ENCODE measurements at regions of chr20 and their contacts with region 1.

Region 1: DNA sequence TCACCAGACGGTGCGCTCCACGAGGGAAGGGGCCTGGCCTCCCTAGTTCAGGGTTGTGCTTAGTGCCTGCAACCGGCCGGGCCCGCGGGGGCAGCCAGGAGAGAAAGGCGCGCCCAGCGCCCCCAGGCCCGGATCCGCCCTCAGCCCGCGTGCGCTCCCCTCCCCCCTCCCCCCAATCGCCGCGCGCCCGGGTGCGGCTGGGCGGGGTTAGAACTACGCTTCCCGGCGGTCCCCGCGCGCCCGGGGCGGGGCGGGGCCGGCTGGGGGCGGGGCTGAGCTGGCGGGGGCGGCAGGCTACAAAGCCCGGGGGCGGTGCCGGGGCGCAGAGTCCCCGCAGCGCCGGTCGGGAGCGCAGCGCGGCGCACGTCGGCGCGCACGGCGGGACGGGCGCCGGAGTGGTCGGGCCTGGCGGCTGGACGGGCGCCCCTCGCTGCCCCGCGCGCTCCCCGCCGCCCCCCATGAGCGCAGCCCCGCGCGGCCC is at the start of gene RBM38:
- DNase-seq: peak; percentile 84
- ATAC-seq: peak; percentile 69
- H3K4me3 Mint-ChIP-seq: peak within 1 kb of the TSS; percentile 78
- H3K27ac Mint-ChIP-seq: peak within 1 kb of the TSS; percentile 93
- H3K4me1 Mint-ChIP-seq: peaks cover 43% of the 10 kb centered on the region
- H3K27me3 Mint-ChIP-seq: no peaks in the 10 kb centered on the region
- total RNA-seq, gene RBM38: 74.8 to 91.9 TPM

Region 2: GRCh38 chr20:57432874-57433491 is 41.9 kb after region 1 on chr20:
- CTCF ChIA-PET with region 1: interaction called, 24 read pairs
- DNase-seq: peak; percentile 91
- ATAC-seq: peak; percentile 93
- H3K4me3 Mint-ChIP-seq: no peak overlapping the region
- H3K27ac Mint-ChIP-seq: peak overlapping the region; percentile 86
- H3K4me1 Mint-ChIP-seq: peaks cover 54% of the 10 kb centered on the region
- H3K27me3 Mint-ChIP-seq: peaks cover 15% of the 10 kb centered on the region

Region 3: DNA sequence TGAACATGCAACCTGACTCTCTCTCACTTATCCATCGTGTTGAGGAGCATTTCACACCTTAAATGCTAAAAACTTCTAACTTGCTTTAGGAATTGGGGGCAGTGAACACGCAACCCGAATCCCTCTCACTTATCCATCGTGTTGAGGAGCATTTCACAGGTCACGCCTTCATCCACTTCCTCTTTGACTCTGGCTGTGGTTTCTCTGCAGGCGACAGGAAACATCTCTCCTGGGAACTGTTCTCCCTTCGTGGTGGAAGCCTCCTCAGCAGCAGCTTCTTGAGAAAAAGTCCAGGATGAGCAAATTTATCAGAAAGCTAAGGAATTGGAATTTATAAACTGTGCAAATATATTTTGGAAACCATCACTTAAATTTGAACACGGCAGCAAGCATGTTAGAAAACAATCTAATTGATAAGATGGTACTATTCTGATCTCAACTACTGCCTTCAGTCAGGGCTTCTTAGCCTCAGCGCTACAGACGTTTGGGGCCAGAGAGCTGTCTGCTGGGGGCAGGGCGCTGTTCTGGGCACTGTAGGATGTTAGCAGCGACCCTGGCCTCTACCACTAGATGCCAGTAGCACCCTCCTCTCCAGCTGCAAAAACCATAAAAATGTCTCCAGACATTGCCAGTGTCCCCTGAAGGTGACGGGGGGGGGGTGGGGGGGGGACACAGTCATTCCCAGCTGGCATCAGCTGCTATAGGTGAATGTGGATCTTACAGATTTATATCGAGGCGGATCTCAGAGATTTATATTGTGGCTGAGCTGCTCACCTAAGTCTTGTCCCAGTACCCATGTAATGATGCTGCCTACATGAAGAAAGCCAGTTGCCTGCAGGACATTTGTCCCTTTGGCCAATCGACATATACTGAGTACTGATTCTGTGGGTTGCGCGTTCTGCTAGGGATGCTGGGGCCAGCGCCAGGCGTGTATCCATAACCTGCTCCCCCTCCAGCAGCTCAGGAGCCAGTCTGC is 107.6 kb after region 1 on chr20:
- CTCF ChIA-PET with region 1: interaction called, 20 read pairs
- DNase-seq: peak; percentile 50
- ATAC-seq: peak; percentile 85
- H3K4me3 Mint-ChIP-seq: no peak overlapping the region
- H3K27ac Mint-ChIP-seq: no peak overlapping the region
- H3K4me1 Mint-ChIP-seq: peaks cover 15% of the 10 kb centered on the region
- H3K27me3 Mint-ChIP-seq: peaks cover 75% of the 10 kb centered on the region